ENCODE measurements at regions of chr22 and their contacts with region 1.

Region 1: GRCh38 chr22:40436505-40437451 is 66.4 kb downstream of the SGSM3 start:
- DNase-seq: peak; percentile 78 to 90 (median 89)
- H3K4me3 ChIP-seq: peak overlapping the region; percentile 17 to 70 (median 40)
- H3K4me3 Mint-ChIP-seq: peak overlapping the region; percentile 71 to 82
- H3K27ac ChIP-seq: peak overlapping the region; percentile 73 to 76
- H3K27ac Mint-ChIP-seq: peak overlapping the region; percentile 88 to 98 (median 95)
- H3K4me1 ChIP-seq: peaks cover 100% of the 10 kb centered on the region in 2 donors
- H3K4me1 Mint-ChIP-seq: peaks cover 99% of the 10 kb centered on the region
- H3K27me3 ChIP-seq: no peaks in the 10 kb centered on the region
- H3K27me3 Mint-ChIP-seq: peaks cover 0 to 3% (median 0%) of the 10 kb centered on the region in 3 donors
- CTCF ChIP-seq: peak; percentile 82

Region 2: GRCh38 chr22:40449676-40450035 is 12.9 kb after region 1 on chr22:
- intact Hi-C with region 1: loop called in 1 of 2 experiments (anchors 1 kb)
- DNase-seq: no peak
- H3K4me3 ChIP-seq: no peak overlapping the region
- H3K4me3 Mint-ChIP-seq: no peak overlapping the region
- H3K27ac ChIP-seq: peak overlapping the region in 1 of 2 donors; percentile 57
- H3K27ac Mint-ChIP-seq: peak overlapping the region; percentile 27 to 82 (median 58)
- H3K4me1 ChIP-seq: peaks cover 81 to 95% of the 10 kb centered on the region in 2 donors
- H3K4me1 Mint-ChIP-seq: peaks cover 100% of the 10 kb centered on the region
- H3K27me3 ChIP-seq: no peaks in the 10 kb centered on the region
- H3K27me3 Mint-ChIP-seq: no peaks in the 10 kb centered on the region
- CTCF ChIP-seq: no peak

Region 3: GRCh38 chr22:40462195-40462984 is 25.6 kb after region 1 on chr22:
- intact Hi-C with region 1: loop called in 1 of 2 experiments (anchors 1 kb)
- DNase-seq: peak in 2 of 3 donors; percentile 29 to 46
- H3K4me3 ChIP-seq: peak overlapping the region; percentile 71 to 100 (median 99)
- H3K4me3 Mint-ChIP-seq: peak overlapping the region; percentile 97 to 100
- H3K27ac ChIP-seq: peak overlapping the region; percentile 67 to 94
- H3K27ac Mint-ChIP-seq: peak overlapping the region; percentile 95 to 99 (median 98)
- H3K4me1 ChIP-seq: peaks cover 65 to 72% of the 10 kb centered on the region in 2 donors
- H3K4me1 Mint-ChIP-seq: peaks cover 70% of the 10 kb centered on the region
- H3K27me3 ChIP-seq: no peaks in the 10 kb centered on the region
- H3K27me3 Mint-ChIP-seq: peaks cover 0 to 2% (median 0%) of the 10 kb centered on the region in 3 donors
- CTCF ChIP-seq: no peak

Region 4: GRCh38 chr22:40487663-40488249 is 51.0 kb after region 1 on chr22:
- intact Hi-C with region 1: loop called (anchors 2 to 5 kb)
- DNase-seq: peak in 2 of 3 donors; percentile 51 to 61
- H3K4me3 ChIP-seq: no peak overlapping the region
- H3K4me3 Mint-ChIP-seq: no peak overlapping the region
- H3K27ac ChIP-seq: peak overlapping the region in 1 of 2 donors; percentile 75
- H3K27ac Mint-ChIP-seq: peak overlapping the region in 6 of 7 donors; percentile 12 to 82 (median 46)
- H3K4me1 ChIP-seq: peaks cover 55 to 66% of the 10 kb centered on the region in 2 donors
- H3K4me1 Mint-ChIP-seq: peaks cover 57% of the 10 kb centered on the region
- H3K27me3 ChIP-seq: no peaks in the 10 kb centered on the region
- H3K27me3 Mint-ChIP-seq: no peaks in the 10 kb centered on the region
- CTCF ChIP-seq: peak; percentile 91

Region 5: GRCh38 chr22:40838486-40838885 is 401.7 kb after region 1 on chr22:
- intact Hi-C with region 1: no loop called
- DNase-seq: no peak
- H3K4me3 ChIP-seq: no peak overlapping the region
- H3K4me3 Mint-ChIP-seq: no peak overlapping the region
- H3K27ac ChIP-seq: no peak overlapping the region
- H3K27ac Mint-ChIP-seq: no peak overlapping the region
- H3K4me1 ChIP-seq: no peaks in the 10 kb centered on the region
- H3K4me1 Mint-ChIP-seq: no peaks in the 10 kb centered on the region
- H3K27me3 ChIP-seq: no peaks in the 10 kb centered on the region
- H3K27me3 Mint-ChIP-seq: no peaks in the 10 kb centered on the region
- CTCF ChIP-seq: no peak

Measured in CD14-positive monocyte (primary cell).